K562 (cell line): ENCODE measurements at regions of chr21 and their contacts with region 1.

Region 1: GRCh38 chr21:15483138-15483780 is 246.5 kb upstream of the USP25 start:
- DNase-seq: peak; percentile 64 to 87 (median 70)
- ATAC-seq: peak; percentile 100
- H3K4me3 ChIP-seq: no peak overlapping the region
- H3K27ac ChIP-seq: no peak overlapping the region
- H3K4me1 ChIP-seq: no peaks in the 10 kb centered on the region
- H3K27me3 ChIP-seq: no peaks in the 10 kb centered on the region
- CTCF ChIP-seq: peak; percentile 86 to 90 (median 88)
- EP300 ChIP-seq: no peak
- POLR2A ChIP-seq: no peak
- RAD21 ChIP-seq: peak; percentile 94 to 97

Region 2: GRCh38 chr21:14259747-14260146 is 1223.5 kb before region 1 on chr21:
- CTCF ChIA-PET with region 1: interaction called, 3 read pairs
- POLR2A ChIA-PET with region 1: no interaction called
- in situ Hi-C with region 1: no loop called
- intact Hi-C with region 1: loop called (anchors 2 kb)
- DNase-seq: peak; percentile 24 to 72 (median 34)
- ATAC-seq: peak; percentile 92
- H3K4me3 ChIP-seq: no peak overlapping the region
- H3K27ac ChIP-seq: no peak overlapping the region
- H3K4me1 ChIP-seq: no peaks in the 10 kb centered on the region; a peak in 1 of 5 replicates
- H3K27me3 ChIP-seq: no peaks in the 10 kb centered on the region
- CTCF ChIP-seq: peak; percentile 48 to 78 (median 63); a peak in 5 of 6 replicates
- EP300 ChIP-seq: no peak
- POLR2A ChIP-seq: no peak
- RAD21 ChIP-seq: peak; percentile 81 to 92

Region 3: GRCh38 chr21:14306151-14306907 is 1176.9 kb before region 1 on chr21:
- CTCF ChIA-PET with region 1: no interaction called
- POLR2A ChIA-PET with region 1: no interaction called
- in situ Hi-C with region 1: no loop called
- intact Hi-C with region 1: loop called (anchors 2 kb)
- DNase-seq: peak in 1 of 4 experiments; percentile 26
- ATAC-seq: 0 out of 3 replicates have a peak, but pooled peaks have one; percentile 28
- H3K4me3 ChIP-seq: no peak overlapping the region
- H3K27ac ChIP-seq: no peak overlapping the region
- H3K4me1 ChIP-seq: no peaks in the 10 kb centered on the region
- H3K27me3 ChIP-seq: no peaks in the 10 kb centered on the region; a peak in 1 of 5 replicates
- CTCF ChIP-seq: peak in 2 of 3 experiments; percentile 21 to 62; a peak in 4 of 6 replicates
- EP300 ChIP-seq: no peak
- POLR2A ChIP-seq: no peak
- RAD21 ChIP-seq: peak; percentile 47 to 76; a peak in 3 of 4 replicates

Region 4: DNA sequence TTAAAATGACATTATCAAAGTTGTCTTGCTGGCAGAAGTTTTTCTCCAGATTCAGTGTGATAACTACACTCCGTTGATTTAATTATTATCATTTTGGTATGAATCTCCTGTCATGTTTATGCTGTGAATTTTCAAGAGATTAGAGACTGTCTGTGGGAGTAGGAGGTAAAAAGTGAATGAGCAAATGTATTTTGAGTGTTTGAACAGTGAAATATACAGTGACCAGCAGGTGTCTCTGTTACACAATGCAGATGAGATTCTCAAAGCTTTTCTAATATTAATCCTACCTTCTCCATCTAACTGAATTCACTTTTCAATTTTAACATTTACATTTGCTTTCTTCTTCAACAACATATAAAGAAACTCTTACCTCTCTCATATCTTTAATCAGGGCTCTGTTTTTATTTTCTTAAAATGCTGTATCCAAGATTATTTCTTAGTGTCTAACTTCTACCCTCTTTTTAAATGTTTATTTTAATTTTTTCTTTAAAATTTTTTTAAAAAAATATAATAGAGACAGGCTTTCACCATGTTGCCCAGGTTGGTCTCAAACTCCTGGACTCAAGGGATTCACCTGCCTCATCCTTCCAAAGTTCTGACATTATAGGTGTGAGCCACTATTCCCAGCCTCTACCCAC is 1079.5 kb before region 1 on chr21:
- CTCF ChIA-PET with region 1: interaction called, 11 read pairs
- POLR2A ChIA-PET with region 1: no interaction called
- in situ Hi-C with region 1: loop called (anchors 25 kb)
- intact Hi-C with region 1: loop called (anchors 1 kb)
- DNase-seq: peak; percentile 31 to 68 (median 42)
- ATAC-seq: peak; percentile 91
- H3K4me3 ChIP-seq: no peak overlapping the region
- H3K27ac ChIP-seq: no peak overlapping the region
- H3K4me1 ChIP-seq: no peaks in the 10 kb centered on the region; a peak in 1 of 5 replicates
- H3K27me3 ChIP-seq: no peaks in the 10 kb centered on the region
- CTCF ChIP-seq: peak; percentile 53 to 81 (median 54)
- EP300 ChIP-seq: no peak
- POLR2A ChIP-seq: no peak
- RAD21 ChIP-seq: peak; percentile 82 to 91

Region 5: DNA sequence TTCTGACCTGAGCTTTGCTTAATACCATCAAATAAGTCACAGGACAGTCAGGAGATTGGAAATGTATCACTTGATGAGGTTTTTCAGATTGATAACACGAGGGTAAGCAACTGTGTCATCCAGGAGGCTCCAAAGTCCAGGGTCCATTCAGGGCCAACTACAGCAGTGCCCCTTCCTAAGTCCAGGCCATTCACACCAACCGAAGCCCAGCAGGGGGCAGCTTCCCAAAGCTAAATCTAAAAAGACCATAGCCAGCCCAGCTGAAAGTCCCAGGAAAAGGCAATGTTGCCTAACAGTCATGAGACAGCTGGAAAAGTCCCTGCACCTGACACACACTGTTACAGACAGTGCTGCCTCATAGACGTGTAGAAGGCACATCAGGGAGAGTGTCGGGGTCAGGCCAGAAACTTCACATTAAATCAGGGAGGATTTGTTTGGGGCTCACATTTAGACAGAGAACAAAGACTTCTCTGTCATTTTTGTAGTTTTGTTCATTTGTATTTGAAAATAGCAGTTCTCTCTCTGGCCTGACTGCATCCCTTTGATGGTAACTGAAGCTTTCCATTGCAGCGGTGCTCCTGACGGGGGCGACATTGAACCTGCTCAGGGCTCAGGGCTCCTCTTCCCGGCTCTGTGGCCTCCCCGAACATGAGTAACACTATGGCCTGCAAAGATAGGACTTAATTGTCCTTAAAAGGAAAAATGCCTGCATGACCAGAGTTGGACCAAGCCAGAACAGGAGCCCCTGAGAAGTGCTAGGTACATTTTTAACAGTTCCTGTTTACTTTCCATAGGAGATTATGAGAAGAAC is 618.8 kb before region 1 on chr21:
- CTCF ChIA-PET with region 1: interaction called, 10 read pairs
- POLR2A ChIA-PET with region 1: no interaction called
- in situ Hi-C with region 1: no loop called
- intact Hi-C with region 1: loop called (anchors 1 kb)
- DNase-seq: peak; percentile 46 to 81 (median 57)
- ATAC-seq: peak; percentile 96
- H3K4me3 ChIP-seq: no peak overlapping the region
- H3K27ac ChIP-seq: no peak overlapping the region
- H3K4me1 ChIP-seq: peaks cover 0 to 16% of the 10 kb centered on the region in 2 experiments; a peak in 2 of 5 replicates
- H3K27me3 ChIP-seq: no peaks in the 10 kb centered on the region
- CTCF ChIP-seq: peak; percentile 73 to 82 (median 75)
- EP300 ChIP-seq: peak; percentile 4; the same call in 1 of the 2 replicates
- POLR2A ChIP-seq: no peak
- RAD21 ChIP-seq: peak; percentile 45 to 82

Region 6: GRCh38 chr21:15064576-15065391 is 418.5 kb before region 1 on chr21 and contains the start of gene NRIP1:
- CTCF ChIA-PET with region 1: interaction called, 3 read pairs
- POLR2A ChIA-PET with region 1: no interaction called
- in situ Hi-C with region 1: no loop called
- intact Hi-C with region 1: loop called (anchors 1 kb)
- DNase-seq: peak; percentile 77 to 91 (median 83)
- ATAC-seq: peak; percentile 81
- H3K4me3 ChIP-seq: peak within 1 kb of the TSS; percentile 80
- H3K27ac ChIP-seq: peak within 1 kb of the TSS; percentile 85
- H3K4me1 ChIP-seq: peaks cover 12% of the 10 kb centered on the region in 2 experiments; a peak in 4 of 5 replicates
- H3K27me3 ChIP-seq: no peaks in the 10 kb centered on the region
- CTCF ChIP-seq: no peak
- EP300 ChIP-seq: no peak
- POLR2A ChIP-seq: peak; percentile 61
- RAD21 ChIP-seq: no peak
- polyA plus RNA-seq, gene NRIP1: 4.3 to 6.3 TPM

Region 7: GRCh38 chr21:15241997-15242736 is 241.1 kb before region 1 on chr21:
- CTCF ChIA-PET with region 1: no interaction called
- POLR2A ChIA-PET with region 1: no interaction called
- in situ Hi-C with region 1: no loop called
- intact Hi-C with region 1: loop called (anchors 1 kb)
- DNase-seq: no peak
- ATAC-seq: no peak
- H3K4me3 ChIP-seq: no peak overlapping the region
- H3K27ac ChIP-seq: no peak overlapping the region
- H3K4me1 ChIP-seq: no peaks in the 10 kb centered on the region
- H3K27me3 ChIP-seq: no peaks in the 10 kb centered on the region
- CTCF ChIP-seq: peak in 1 of 3 experiments; percentile 26; a peak in 2 of 6 replicates
- EP300 ChIP-seq: no peak
- POLR2A ChIP-seq: no peak
- RAD21 ChIP-seq: peak in 1 of 2 experiments; percentile 55; a peak in 3 of 4 replicates

Region 8: GRCh38 chr21:15495965-15496364 is 12.7 kb after region 1 on chr21:
- CTCF ChIA-PET with region 1: no interaction called
- POLR2A ChIA-PET with region 1: no interaction called
- in situ Hi-C with region 1: no loop called
- intact Hi-C with region 1: no loop called
- DNase-seq: no peak
- ATAC-seq: no peak
- H3K4me3 ChIP-seq: no peak overlapping the region
- H3K27ac ChIP-seq: no peak overlapping the region
- H3K4me1 ChIP-seq: no peaks in the 10 kb centered on the region
- H3K27me3 ChIP-seq: peaks cover 0 to 5% of the 10 kb centered on the region in 2 experiments; a peak in 1 of 5 replicates
- CTCF ChIP-seq: no peak
- EP300 ChIP-seq: no peak
- POLR2A ChIP-seq: no peak
- RAD21 ChIP-seq: no peak